Activated T-helper 1 cell treated with anti-CD3 and anti-CD28 coated beads, Interleukin-12 subunit alpha, Interleukin-12 subunit beta, Interleukin-2, Interleukin-4 antibody, amounts not matched to agents 30 ng/mL and 10 ng/mL and 1 ng/mL, durations not matched to agents 14 hours and 24 hours and 36 hours (primary cell): ENCODE measurements at regions of chr1 and their contacts with region 1.

Region 1: DNA sequence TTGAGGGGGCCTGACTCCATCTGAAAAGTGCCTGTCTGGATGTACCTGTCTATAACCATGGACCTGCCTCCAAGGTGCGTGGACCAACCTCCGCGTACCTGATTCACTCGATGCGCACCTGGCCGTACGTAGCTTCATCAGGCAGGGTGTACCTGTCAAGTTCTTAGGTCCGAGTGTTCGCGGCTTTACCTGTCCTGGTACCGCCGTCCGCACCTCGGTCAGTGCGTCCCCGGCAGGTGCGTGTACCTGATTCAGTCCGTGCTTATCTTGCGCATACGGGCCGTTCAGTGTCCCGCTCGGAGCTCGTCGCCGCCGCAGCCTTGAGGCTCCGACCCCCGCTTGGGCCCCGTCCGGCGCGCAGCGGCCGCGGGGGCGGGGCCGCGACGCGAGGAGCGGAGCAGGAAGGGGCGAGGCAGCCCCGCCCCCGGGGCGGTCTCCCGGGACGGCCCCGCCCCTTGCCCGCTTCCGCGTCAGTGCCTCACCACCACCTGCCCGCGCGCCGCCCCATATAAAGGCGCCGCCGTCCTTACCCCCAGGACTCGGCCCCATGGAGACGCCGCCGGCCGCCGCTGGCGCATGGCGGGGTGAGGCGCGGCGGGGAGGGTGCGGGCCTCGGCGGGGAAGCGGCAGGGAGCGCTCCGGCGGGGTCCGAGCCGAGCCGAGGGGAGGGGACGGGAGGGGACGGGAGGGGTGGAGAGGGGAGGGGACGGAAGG is at the start of gene ZC3H12A:
- DNase-seq: peak; percentile 91
- H3K4me3 Mint-ChIP-seq: peak within 1 kb of the TSS; percentile 100
- H3K27ac Mint-ChIP-seq: peak within 1 kb of the TSS; percentile 97
- H3K4me1 Mint-ChIP-seq: peaks cover 50% of the 10 kb centered on the region
- H3K27me3 Mint-ChIP-seq: peaks cover 8% of the 10 kb centered on the region
- total RNA-seq, gene ZC3H12A: 40.4 and 44.0 TPM in 2 replicates

Region 2: DNA sequence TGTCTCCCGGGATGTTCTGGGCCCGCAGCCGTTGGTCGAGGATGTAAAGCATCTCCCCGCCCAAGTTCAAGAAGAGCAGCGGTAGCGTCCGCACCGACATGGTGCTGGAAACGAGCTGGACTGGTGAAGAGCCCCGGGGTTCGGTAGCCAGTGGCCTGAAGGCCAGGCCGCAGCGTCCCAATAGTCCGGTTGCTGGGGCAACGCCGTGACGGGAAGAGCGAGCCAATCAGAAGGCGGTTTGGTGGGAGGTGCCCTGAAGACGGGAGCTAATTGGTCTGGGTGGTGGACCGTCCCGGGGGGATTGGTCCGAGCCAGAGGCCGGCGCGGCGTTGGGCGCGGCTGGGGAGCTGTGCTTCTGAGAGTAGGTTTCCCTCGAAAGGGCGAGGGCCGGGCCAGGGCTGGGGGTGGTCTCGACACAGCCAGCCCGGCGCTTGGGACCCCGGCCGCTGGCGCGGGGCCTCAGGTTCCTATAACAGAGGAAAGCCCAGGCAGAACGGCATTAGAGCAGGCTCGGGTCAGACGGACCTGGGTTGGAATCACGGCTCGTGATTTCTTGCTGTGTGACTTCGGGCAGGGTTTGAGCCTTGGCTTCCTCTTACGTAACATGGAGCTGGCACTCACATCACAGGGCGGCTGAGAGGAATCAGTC is 1023.8 kb before region 1 on chr1 and contains the start of gene OSCP1:
- intact Hi-C with region 1: loop called (anchors 10 kb)
- DNase-seq: peak; percentile 86
- H3K4me3 Mint-ChIP-seq: peak within 1 kb of the TSS; percentile 86
- H3K27ac Mint-ChIP-seq: peak within 1 kb of the TSS; percentile 82
- H3K4me1 Mint-ChIP-seq: peaks cover 11% of the 10 kb centered on the region
- H3K27me3 Mint-ChIP-seq: no peaks in the 10 kb centered on the region
- total RNA-seq, gene OSCP1: 0.39 and 0.96 TPM in 2 replicates

Region 3: DNA sequence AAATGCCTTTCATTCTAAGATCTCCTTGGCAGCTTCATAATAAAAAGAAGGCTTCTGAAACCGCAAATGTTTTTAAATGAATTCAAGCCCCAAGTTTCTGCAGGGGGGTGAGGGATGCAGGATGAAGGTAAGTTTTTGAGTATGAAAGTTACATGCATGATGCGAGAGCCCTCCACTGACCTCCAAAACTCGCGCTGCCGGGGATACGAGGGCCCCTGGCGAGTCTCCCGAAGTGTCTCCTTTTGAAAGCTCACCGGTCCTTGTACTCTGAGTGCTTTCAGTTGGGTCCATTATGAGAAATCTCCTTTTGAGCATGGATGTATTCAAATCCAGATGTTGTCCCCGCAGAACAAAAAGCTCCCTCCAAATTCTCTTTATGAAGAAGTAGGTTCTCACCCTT is 18.7 kb before region 1 on chr1:
- intact Hi-C with region 1: loop called (anchors 1 kb)
- DNase-seq: no peak
- H3K4me3 Mint-ChIP-seq: no peak overlapping the region
- H3K27ac Mint-ChIP-seq: no peak overlapping the region
- H3K4me1 Mint-ChIP-seq: peaks cover 7% of the 10 kb centered on the region
- H3K27me3 Mint-ChIP-seq: no peaks in the 10 kb centered on the region

Region 4: DNA sequence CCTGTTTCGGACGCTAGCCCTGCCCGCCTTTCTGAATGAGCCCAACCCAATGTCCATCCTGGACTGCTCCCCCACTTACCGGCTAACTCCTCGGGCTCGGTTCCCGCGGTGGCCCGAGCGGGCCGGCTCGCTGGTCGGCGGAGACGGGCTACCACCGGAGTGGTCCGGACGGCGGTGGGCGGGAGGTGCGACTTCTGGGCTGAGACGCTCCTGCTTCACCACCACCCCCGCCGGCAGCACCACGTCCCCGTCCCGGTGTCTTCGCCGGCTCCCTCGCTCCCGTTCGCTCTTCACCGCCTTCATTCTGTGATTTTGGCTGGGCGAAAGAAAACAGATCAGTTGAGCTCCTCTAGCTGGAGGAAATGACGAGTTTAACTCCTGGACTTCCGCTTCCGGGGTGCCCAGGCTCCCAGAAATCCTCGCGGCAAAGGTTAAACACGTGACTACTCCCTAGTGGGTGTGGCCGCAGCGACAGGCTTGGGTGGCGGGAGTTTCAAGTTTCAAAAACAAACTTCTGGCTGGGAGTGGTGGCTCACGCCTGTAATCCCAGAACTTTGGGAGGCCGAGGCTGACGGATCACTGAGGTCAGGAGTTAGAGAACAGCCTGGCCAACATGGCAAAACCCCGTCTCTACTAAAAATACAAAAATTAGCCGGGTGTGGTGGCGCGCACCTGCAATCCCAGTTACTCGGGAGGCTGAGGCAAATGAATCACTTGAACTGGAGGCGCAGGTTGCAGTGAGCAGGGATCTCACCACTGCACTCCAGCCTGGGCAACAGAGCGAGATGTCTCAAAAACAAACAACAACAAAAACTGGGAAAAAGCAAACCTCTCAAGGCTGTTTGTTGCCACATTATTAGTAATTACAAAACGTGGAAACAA is 80.0 kb after region 1 on chr1 and contains the start of gene SNIP1:
- intact Hi-C with region 1: loop called (anchors 1 kb)
- DNase-seq: peak; percentile 89
- H3K4me3 Mint-ChIP-seq: peak within 1 kb of the TSS; percentile 98
- H3K27ac Mint-ChIP-seq: peak within 1 kb of the TSS; percentile 98
- H3K4me1 Mint-ChIP-seq: peaks cover 49% of the 10 kb centered on the region
- H3K27me3 Mint-ChIP-seq: no peaks in the 10 kb centered on the region
- total RNA-seq, gene SNIP1: 28.1 and 30.2 TPM in 2 replicates

Region 5: GRCh38 chr1:37631036-37631435 is 156.8 kb after region 1 on chr1:
- intact Hi-C with region 1: no loop called
- DNase-seq: no peak
- H3K4me3 Mint-ChIP-seq: no peak overlapping the region
- H3K27ac Mint-ChIP-seq: no peak overlapping the region
- H3K4me1 Mint-ChIP-seq: no peaks in the 10 kb centered on the region
- H3K27me3 Mint-ChIP-seq: peaks cover 75% of the 10 kb centered on the region

Region 6: DNA sequence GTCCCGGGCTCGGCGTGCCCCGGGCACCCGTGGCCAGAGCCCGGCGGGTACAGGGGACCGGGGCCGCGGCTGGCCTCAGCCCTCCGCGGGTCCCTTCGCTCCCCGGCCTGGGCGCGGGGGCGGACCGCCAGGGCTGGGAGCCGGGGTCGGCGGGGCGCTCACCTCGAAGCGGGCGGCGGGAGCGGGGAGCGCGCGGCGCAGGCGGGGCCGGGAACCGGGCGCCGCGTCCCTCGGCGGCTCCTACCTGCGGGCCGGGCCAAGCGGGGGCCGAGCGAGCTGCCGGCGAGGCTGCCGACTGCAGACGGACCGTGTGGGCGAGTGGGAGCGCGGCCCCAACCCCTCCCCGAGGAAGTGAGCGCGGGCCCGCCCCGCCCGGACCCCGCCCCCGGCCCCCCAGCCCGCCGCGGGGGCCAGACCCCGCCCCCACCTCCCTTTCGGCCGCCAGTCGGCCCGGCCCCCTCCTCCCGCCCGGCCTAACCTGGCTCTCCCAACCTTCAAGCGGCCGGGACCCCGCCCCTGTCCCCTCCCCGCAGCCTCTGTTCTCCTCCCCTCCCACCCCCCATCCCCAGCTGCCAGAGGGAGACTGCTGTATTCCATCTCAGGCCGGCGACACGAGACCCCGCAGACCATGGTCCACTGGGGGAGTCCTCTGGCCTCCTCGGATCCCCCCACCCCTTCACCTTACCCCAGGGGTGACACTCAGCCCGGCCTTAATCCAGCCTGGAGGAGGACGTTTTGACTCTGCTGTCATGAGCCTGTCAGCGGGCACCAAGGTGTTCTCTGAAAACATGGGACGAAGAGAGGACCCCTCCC is 531.2 kb after region 1 on chr1 and contains the start of gene FHL3:
- intact Hi-C with region 1: loop called (anchors 10 kb)
- DNase-seq: peak; percentile 32
- H3K4me3 Mint-ChIP-seq: peak within 1 kb of the TSS; percentile 92
- H3K27ac Mint-ChIP-seq: peak within 1 kb of the TSS; percentile 75
- H3K4me1 Mint-ChIP-seq: peaks cover 52% of the 10 kb centered on the region
- H3K27me3 Mint-ChIP-seq: no peaks in the 10 kb centered on the region
- total RNA-seq, gene FHL3: 32.5 and 35.7 TPM in 2 replicates

Region 7: DNA sequence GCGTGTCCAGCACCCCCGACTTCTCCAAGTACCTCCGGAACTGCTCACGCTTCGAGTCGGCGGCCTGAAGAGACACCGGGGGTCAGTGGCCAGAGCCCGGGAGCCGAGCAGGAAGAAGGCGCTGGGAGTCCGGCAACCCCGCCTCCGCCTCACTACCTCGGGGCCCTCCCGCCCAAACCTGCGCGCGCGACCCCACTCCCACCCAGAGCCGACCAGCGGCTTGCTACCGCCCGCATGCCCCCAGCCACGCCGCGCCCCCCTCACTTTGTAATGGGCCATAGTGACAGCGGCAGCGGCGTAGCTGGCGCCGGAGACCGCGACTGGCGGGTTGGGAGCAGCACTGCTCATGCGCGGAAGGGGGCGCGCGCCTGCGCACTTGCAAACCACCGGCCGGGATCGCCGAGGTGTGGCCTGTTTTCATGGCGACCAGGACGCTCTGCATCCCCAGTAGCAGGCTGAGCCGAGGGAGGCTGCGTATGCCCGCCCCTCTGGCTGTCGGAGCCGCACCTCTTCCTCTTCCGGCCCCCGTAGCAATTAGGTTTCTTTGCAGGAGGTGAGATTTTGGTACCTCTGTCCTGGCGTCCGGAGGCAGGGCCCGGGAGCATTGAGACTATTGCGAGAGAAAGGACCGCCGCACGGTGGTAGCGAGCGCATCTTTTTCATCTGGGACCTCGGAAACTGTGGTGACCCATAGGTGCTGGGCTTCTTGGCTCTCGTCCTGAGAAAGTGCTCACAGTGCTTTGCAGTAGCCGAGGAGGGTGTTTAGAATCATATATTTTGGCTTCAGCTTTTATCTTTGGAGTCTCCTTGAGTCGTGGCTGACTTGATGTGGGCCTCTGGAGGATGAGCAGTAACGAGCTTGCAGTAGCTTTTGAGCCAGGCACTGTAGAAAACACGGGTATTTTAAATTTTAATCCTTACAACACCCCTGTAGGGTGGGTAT is 1399.1 kb after region 1 on chr1 and contains the start of gene MYCBP:
- intact Hi-C with region 1: loop called (anchors 10 kb)
- DNase-seq: peak; percentile 98
- H3K4me3 Mint-ChIP-seq: peak within 1 kb of the TSS; percentile 87
- H3K27ac Mint-ChIP-seq: peak within 1 kb of the TSS; percentile 79
- H3K4me1 Mint-ChIP-seq: peaks cover 23% of the 10 kb centered on the region
- H3K27me3 Mint-ChIP-seq: no peaks in the 10 kb centered on the region
- total RNA-seq, gene MYCBP: 38.4 and 39.7 TPM in 2 replicates